ENCODE measurements at regions of chr5 and their contacts with region 1.

Region 1: GRCh38 chr5:151651997-151652645 is 34.6 kb downstream of the SPARC start:
- DNase-seq: peak; percentile 19 to 82 (median 54)
- ATAC-seq: peak; percentile 76 to 98 (median 92)
- H3K4me3 ChIP-seq: no peak overlapping the region
- H3K4me3 Mint-ChIP-seq: no peak overlapping the region
- H3K27ac ChIP-seq: no peak overlapping the region
- H3K27ac Mint-ChIP-seq: no peak overlapping the region
- H3K4me1 ChIP-seq: peaks cover 0 to 3% of the 10 kb centered on the region in 2 experiments
- H3K4me1 Mint-ChIP-seq: no peaks in the 10 kb centered on the region
- H3K27me3 ChIP-seq: no peaks in the 10 kb centered on the region
- H3K27me3 Mint-ChIP-seq: peaks cover 3 to 5% of the 10 kb centered on the region in 2 donors

Region 2: GRCh38 chr5:151523335-151523734 is 128.8 kb before region 1 on chr5:
- CTCF ChIA-PET with region 1: interaction called in 1 of 2 experiments, 12 read pairs
- POLR2A ChIA-PET with region 1: no interaction called
- DNase-seq: peak in 17 of 35 experiments; percentile 5 to 52 (median 14)
- ATAC-seq: peak; percentile 48 to 75 (median 62)
- H3K4me3 ChIP-seq: no peak overlapping the region
- H3K4me3 Mint-ChIP-seq: no peak overlapping the region
- H3K27ac ChIP-seq: no peak overlapping the region
- H3K27ac Mint-ChIP-seq: no peak overlapping the region
- H3K4me1 ChIP-seq: peaks cover 0 to 3% of the 10 kb centered on the region in 2 experiments
- H3K4me1 Mint-ChIP-seq: peaks cover 0 to 11% (median 5%) of the 10 kb centered on the region in 3 donors
- H3K27me3 ChIP-seq: peaks cover 0 to 4% of the 10 kb centered on the region in 2 experiments
- H3K27me3 Mint-ChIP-seq: no peaks in the 10 kb centered on the region

Region 3: GRCh38 chr5:151596828-151597539 is 55.1 kb before region 1 on chr5:
- CTCF ChIA-PET with region 1: no interaction called
- POLR2A ChIA-PET with region 1: no interaction called
- DNase-seq: no peak
- ATAC-seq: no peak
- H3K4me3 ChIP-seq: no peak overlapping the region
- H3K4me3 Mint-ChIP-seq: no peak overlapping the region
- H3K27ac ChIP-seq: no peak overlapping the region
- H3K27ac Mint-ChIP-seq: no peak overlapping the region
- H3K4me1 ChIP-seq: no peaks in the 10 kb centered on the region
- H3K4me1 Mint-ChIP-seq: no peaks in the 10 kb centered on the region
- H3K27me3 ChIP-seq: peaks cover 0 to 11% of the 10 kb centered on the region in 2 experiments
- H3K27me3 Mint-ChIP-seq: no peaks in the 10 kb centered on the region

Region 4: DNA sequence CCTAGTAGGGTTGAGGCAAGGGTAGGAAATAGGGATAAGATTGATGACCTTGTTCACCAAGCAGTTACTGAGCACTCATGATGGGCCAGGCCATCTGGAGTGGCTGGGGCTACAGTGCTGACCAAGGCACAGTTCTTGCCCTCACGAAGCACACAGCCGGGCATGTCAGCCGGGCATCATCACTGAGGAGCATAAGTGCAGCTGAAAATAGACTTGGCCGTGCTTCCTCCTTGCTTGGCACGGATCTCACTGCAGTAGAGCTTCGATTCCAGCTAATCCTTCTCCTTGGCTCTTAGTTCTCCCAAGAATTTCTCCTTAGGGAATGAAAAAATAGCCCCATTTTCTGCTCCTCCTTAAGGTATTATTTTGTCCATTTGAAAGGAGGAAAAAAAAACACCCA is 636.4 kb after region 1 on chr5:
- CTCF ChIA-PET with region 1: no interaction called
- POLR2A ChIA-PET with region 1: no interaction called
- DNase-seq: no peak
- ATAC-seq: no peak
- H3K4me3 ChIP-seq: no peak overlapping the region
- H3K4me3 Mint-ChIP-seq: no peak overlapping the region
- H3K27ac ChIP-seq: no peak overlapping the region
- H3K27ac Mint-ChIP-seq: no peak overlapping the region
- H3K4me1 ChIP-seq: no peaks in the 10 kb centered on the region
- H3K4me1 Mint-ChIP-seq: no peaks in the 10 kb centered on the region
- H3K27me3 ChIP-seq: no peaks in the 10 kb centered on the region
- H3K27me3 Mint-ChIP-seq: peaks cover 3 to 13% of the 10 kb centered on the region in 2 donors